CD8-positive, alpha-beta memory T cell (primary cell): ENCODE measurements at regions of chr5 and their contacts with region 1.

Region 1: DNA sequence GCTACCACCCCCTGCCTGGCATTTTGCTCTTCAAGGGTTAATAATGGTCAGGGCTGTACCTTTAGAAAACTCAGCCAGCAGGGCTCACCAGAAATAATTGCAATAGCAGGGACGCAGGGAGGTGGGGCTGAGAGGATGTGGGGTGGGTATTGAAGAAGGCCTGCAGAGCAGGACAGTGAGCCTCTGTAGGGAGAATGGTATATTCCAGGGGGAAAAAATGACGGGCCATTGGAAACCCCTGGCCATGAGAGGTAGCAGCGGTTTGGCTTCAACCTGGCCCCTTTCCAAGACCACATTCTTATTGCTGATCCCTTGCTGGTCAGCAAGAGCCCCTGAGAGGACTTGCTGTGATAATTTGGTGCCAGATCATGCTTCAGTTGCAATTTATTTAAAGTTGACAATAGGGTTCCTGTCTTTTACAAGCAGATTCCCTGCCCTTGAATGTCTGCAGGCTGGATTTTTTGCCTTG is 36.7 kb upstream of the CTNNA1 start:
- DNase-seq: no peak
- H3K4me3 ChIP-seq: no peak overlapping the region
- H3K4me3 Mint-ChIP-seq: no peak overlapping the region
- H3K27ac ChIP-seq: no peak overlapping the region
- H3K27ac Mint-ChIP-seq: no peak overlapping the region
- H3K4me1 ChIP-seq: no peaks in the 10 kb centered on the region
- H3K4me1 Mint-ChIP-seq: no peaks in the 10 kb centered on the region
- H3K27me3 ChIP-seq: peaks cover 7% of the 10 kb centered on the region
- H3K27me3 Mint-ChIP-seq: peaks cover 8 to 32% of the 10 kb centered on the region in 2 donors

Region 2: DNA sequence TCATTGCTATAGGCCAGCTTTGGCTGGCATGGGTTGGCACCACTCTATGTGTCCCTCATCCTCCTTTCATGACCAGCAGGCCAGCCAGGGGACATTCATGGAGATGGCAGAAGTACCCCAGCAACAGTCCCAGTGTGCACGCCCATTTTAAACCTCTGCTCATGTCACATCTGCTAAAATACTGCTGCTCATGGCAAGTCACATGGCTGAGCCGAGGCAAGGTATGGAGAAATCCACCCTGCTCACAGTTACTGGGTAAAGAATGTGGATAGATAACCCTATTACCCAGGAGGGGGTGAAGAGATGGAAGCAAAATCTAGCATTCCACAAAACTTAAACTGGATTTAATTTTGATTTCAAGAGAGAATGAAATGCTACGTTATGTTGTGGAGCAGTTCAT is 46.4 kb before region 1 on chr5:
- CTCF ChIA-PET with region 1: no interaction called
- POLR2A ChIA-PET with region 1: interaction called, 11 read pairs
- DNase-seq: no peak
- H3K4me3 ChIP-seq: no peak overlapping the region
- H3K4me3 Mint-ChIP-seq: no peak overlapping the region
- H3K27ac ChIP-seq: no peak overlapping the region
- H3K27ac Mint-ChIP-seq: no peak overlapping the region
- H3K4me1 ChIP-seq: peaks cover 21% of the 10 kb centered on the region
- H3K4me1 Mint-ChIP-seq: peaks cover 24 to 25% (median 24%) of the 10 kb centered on the region in 3 donors
- H3K27me3 ChIP-seq: peaks cover 64% of the 10 kb centered on the region
- H3K27me3 Mint-ChIP-seq: peaks cover 77 to 86% of the 10 kb centered on the region in 2 donors

Region 3: GRCh38 chr5:138853132-138853531 is 136.6 kb after region 1 on chr5:
- CTCF ChIA-PET with region 1: no interaction called
- POLR2A ChIA-PET with region 1: no interaction called
- DNase-seq: no peak
- H3K4me3 ChIP-seq: no peak overlapping the region
- H3K4me3 Mint-ChIP-seq: peak overlapping the region in 3 of 7 donors; percentile 1 to 43 (median 17)
- H3K27ac ChIP-seq: no peak overlapping the region
- H3K27ac Mint-ChIP-seq: no peak overlapping the region
- H3K4me1 ChIP-seq: no peaks in the 10 kb centered on the region
- H3K4me1 Mint-ChIP-seq: peaks cover 12 to 29% (median 13%) of the 10 kb centered on the region in 3 donors
- H3K27me3 ChIP-seq: no peaks in the 10 kb centered on the region
- H3K27me3 Mint-ChIP-seq: peaks cover 0 to 3% of the 10 kb centered on the region in 2 donors